ENCODE measurements at regions of chr9 and their contacts with region 1.

Region 1: DNA sequence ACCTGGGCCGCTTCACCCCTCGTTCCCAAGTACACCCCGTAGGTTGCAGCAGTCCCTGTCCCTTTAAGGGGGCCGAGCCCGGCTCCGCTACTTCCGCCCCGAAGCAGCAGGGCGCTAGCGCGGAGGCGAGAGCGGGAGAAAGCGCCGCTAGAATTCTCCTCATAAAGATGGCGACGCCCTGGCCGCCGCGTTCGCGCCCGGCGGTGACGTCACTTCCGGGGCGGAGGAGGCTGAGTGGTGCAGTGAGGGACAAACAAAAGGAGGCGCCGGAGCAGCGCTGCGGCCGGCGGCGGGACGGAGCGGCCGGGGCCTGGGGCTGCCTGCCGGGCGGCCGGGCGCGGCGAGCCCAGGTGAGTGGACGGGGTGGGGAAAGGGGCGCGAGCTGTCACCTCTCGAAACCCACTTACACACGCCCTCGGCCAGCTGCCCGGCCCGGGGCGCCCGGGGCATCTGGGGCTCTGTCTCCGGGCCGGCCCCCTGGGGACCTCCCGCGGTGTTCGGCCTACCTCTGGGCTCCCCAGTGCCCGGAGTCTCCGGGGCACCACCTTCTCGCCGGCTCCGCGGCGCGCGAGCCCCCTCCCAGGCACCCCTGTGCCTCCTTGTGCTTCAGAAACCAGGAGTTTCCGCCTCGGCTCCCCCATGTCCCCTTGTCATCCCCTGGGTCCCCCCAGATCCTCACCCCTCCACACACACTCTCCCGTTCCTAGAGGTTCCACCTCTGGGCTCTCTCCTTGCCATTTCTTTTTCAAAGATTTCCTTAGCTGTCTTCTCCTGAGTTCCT is at the starts of genes KYAT1 and LRRC8A:
- DNase-seq: peak; percentile 99
- H3K4me3 Mint-ChIP-seq: peak within 1 kb of the TSS; percentile 95
- H3K27ac Mint-ChIP-seq: peak within 1 kb of the TSS; percentile 89
- H3K4me1 Mint-ChIP-seq: peaks cover 50% of the 10 kb centered on the region
- H3K27me3 Mint-ChIP-seq: no peaks in the 10 kb centered on the region
- total RNA-seq, gene KYAT1: 15.9 to 18.1 TPM
- total RNA-seq, gene LRRC8A: 18.0 to 18.7 TPM

Region 2: GRCh38 chr9:128370826-128371621 is 511.1 kb before region 1 on chr9 and contains the start of gene URM1:
- CTCF ChIA-PET with region 1: no interaction called
- POLR2A ChIA-PET with region 1: no interaction called
- intact Hi-C with region 1: loop called (anchors 5 kb)
- DNase-seq: peak; percentile 98
- H3K4me3 Mint-ChIP-seq: peak within 1 kb of the TSS; percentile 99
- H3K27ac Mint-ChIP-seq: peak within 1 kb of the TSS; percentile 93
- H3K4me1 Mint-ChIP-seq: peaks cover 27% of the 10 kb centered on the region
- H3K27me3 Mint-ChIP-seq: no peaks in the 10 kb centered on the region
- total RNA-seq, gene URM1: 45.9 to 50.0 TPM

Region 3: GRCh38 chr9:128829477-128830251 is 52.4 kb before region 1 on chr9 and contains the start of gene SPOUT1:
- CTCF ChIA-PET with region 1: no interaction called
- POLR2A ChIA-PET with region 1: interaction called, 3 read pairs
- intact Hi-C with region 1: loop called (anchors 5 kb)
- DNase-seq: peak; percentile 97
- H3K4me3 Mint-ChIP-seq: peak within 1 kb of the TSS; percentile 91
- H3K27ac Mint-ChIP-seq: peak within 1 kb of the TSS; percentile 86
- H3K4me1 Mint-ChIP-seq: peaks cover 23% of the 10 kb centered on the region
- H3K27me3 Mint-ChIP-seq: no peaks in the 10 kb centered on the region
- total RNA-seq, gene SPOUT1: 89.2 to 94.2 TPM

Region 4: GRCh38 chr9:128902351-128903078 is 20.4 kb after region 1 on chr9:
- CTCF ChIA-PET with region 1: no interaction called
- POLR2A ChIA-PET with region 1: interaction called, 7 read pairs
- intact Hi-C with region 1: loop called (anchors 1 kb)
- DNase-seq: peak; percentile 92
- H3K4me3 Mint-ChIP-seq: peak overlapping the region; percentile 48
- H3K27ac Mint-ChIP-seq: peak overlapping the region; percentile 83
- H3K4me1 Mint-ChIP-seq: peaks cover 62% of the 10 kb centered on the region
- H3K27me3 Mint-ChIP-seq: no peaks in the 10 kb centered on the region

Region 5: DNA sequence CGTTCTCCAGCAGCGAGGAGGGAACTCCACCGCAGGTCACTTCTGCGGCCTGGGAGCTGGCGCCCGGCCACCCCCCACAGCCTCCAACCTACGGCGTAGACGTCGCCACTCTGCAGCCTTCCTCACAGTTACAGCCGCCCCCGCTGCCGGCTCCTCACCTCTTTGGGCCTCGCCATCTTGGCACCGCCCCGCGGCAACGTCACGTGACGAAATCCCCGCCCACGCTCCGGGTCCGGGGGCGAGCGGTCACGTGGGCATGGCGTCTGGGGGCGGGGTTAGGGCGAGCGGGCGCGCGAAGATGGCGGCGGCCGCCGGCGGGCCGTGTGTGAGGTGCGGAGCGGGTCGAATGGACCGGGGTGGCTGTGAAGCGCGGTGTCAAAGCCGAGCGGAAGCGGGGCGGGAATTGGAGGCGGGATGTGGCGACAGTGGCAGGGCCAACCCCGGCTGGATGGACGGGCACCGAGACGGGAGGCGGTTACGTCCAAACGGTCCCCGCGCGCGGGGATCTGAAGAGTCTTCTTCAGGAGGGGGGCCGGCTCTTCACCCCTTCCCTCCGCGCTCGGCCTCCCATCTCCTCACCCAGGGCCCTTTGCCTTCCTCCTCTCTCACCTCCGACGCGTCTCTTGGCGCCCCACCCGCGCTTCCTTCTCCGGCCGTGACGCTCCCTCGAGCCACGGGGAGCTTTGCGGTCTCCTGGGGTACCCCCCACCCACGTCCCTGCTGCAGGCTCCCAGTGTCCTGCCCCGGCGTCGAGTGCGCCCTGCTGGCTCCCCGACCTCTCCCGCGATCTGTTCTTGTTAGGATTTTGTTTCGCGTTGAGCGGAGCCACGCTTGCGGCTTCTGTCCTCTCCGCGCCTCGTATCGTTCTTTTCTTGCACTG is 65.6 kb after region 1 on chr9 and contains the starts of genes DOLK and NUP188:
- CTCF ChIA-PET with region 1: interaction called, 3 read pairs
- POLR2A ChIA-PET with region 1: interaction called, 3 read pairs
- intact Hi-C with region 1: loop called (anchors 1 kb)
- DNase-seq: peak; percentile 98
- H3K4me3 Mint-ChIP-seq: peak within 1 kb of the TSS; percentile 98
- H3K27ac Mint-ChIP-seq: peak within 1 kb of the TSS; percentile 98
- H3K4me1 Mint-ChIP-seq: peaks cover 27% of the 10 kb centered on the region
- H3K27me3 Mint-ChIP-seq: no peaks in the 10 kb centered on the region
- total RNA-seq, gene DOLK: 5.7 to 6.7 TPM
- total RNA-seq, gene NUP188: 121 to 124 TPM

Region 6: DNA sequence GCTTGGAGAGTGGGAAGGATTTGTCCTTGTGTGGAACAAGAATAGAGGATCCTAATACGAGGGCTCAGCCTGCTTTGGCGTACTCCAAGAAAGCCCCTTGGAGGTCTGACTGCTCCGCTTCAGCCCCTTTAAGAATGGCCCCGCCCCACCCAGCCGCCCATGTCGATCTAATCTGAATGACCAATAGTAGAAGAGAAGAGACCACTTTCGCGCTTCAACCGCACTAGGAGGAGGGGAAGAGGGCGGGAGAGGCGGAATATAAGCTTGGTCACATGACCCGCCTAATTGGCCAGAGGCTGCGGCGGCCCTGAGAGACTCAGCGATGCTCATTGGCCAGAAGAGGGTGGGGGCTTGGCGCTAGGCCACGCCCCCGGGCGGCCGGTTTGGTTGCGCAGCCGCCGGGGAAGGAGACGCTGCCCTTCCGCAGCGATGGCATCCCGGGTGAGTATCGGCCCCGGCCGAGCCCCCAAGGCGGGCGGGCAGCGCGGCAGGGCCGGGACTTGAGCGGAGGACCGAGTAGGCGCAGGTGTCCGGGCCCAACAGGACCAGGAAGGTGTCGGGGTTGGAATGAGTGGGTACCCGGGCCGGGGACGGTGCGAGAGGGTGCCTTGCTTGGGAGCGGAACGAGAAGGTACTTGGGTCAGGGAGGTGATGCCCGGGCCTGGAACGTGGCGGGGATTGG is 154.3 kb after region 1 on chr9 and contains the start of gene MIGA2:
- CTCF ChIA-PET with region 1: no interaction called
- POLR2A ChIA-PET with region 1: no interaction called
- intact Hi-C with region 1: loop called (anchors 2 kb)
- DNase-seq: peak; percentile 97
- H3K4me3 Mint-ChIP-seq: peak within 1 kb of the TSS; percentile 98
- H3K27ac Mint-ChIP-seq: peak within 1 kb of the TSS; percentile 19
- H3K4me1 Mint-ChIP-seq: peaks cover 26% of the 10 kb centered on the region
- H3K27me3 Mint-ChIP-seq: no peaks in the 10 kb centered on the region
- total RNA-seq, gene MIGA2: 26.1 to 26.5 TPM